GM12878 (cell line): ENCODE measurements at regions of chr9 and their contacts with region 1.

Region 1: DNA sequence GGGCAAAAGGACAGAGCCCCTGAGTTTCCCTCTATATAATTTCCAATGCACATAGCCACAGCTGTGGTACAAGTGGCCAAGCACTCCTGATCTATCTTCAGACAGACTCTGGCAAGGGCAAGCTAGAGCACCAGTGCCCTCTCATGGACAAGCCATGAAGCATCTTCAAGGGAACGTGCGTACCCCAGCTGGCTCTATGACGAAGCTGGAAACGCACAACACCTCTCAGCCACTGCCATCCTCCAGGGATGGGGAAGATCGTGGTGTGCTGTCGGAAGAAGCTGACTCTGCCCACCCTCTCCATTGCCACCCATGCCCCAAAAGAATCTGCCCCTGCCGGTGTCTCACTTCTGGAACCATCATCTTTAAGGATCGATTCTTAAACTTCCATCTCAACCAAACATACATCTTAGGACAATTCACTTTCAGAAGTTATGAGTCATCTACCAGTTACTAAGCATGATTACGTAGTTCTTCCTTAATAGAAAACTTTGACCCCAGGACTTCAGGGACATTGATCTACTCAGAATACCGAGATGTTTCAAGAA is 482.9 kb downstream of the AGTPBP1 start:
- DNase-seq: peak; percentile 20
- ATAC-seq: peak; percentile 97
- H3K4me3 ChIP-seq: no peak overlapping the region
- H3K27ac ChIP-seq: no peak overlapping the region
- H3K4me1 ChIP-seq: no peaks in the 10 kb centered on the region
- H3K27me3 ChIP-seq: peaks cover 0 to 3% of the 10 kb centered on the region in 2 experiments; a peak in 1 of 4 replicates
- CTCF ChIP-seq: peak; percentile 69 to 82 (median 72)
- EP300 ChIP-seq: no peak
- POLR2A ChIP-seq: no peak
- RAD21 ChIP-seq: peak; percentile 75

Region 2: GRCh38 chr9:84397151-84397728 is 861.7 kb before region 1 on chr9:
- CTCF ChIA-PET with region 1: interaction called, 46 read pairs
- POLR2A ChIA-PET with region 1: no interaction called
- RAD21 ChIA-PET with region 1: interaction called, 11 read pairs
- SMC1A ChIA-PET with region 1: interaction called, 9 read pairs
- in situ Hi-C with region 1: loop called (anchors 10 kb)
- intact Hi-C with region 1: loop called (anchors 2 kb)
- DNase-seq: peak; percentile 8
- ATAC-seq: peak; percentile 96
- H3K4me3 ChIP-seq: no peak overlapping the region
- H3K27ac ChIP-seq: no peak overlapping the region
- H3K4me1 ChIP-seq: no peaks in the 10 kb centered on the region
- H3K27me3 ChIP-seq: peaks cover 0 to 2% of the 10 kb centered on the region in 2 experiments; a peak in 1 of 4 replicates
- CTCF ChIP-seq: peak; percentile 77 to 91 (median 80)
- EP300 ChIP-seq: no peak
- POLR2A ChIP-seq: no peak
- RAD21 ChIP-seq: peak; percentile 87

Region 3: GRCh38 chr9:84404095-84404686 is 854.7 kb before region 1 on chr9:
- CTCF ChIA-PET with region 1: interaction called, 4 read pairs
- POLR2A ChIA-PET with region 1: no interaction called
- RAD21 ChIA-PET with region 1: no interaction called
- SMC1A ChIA-PET with region 1: interaction called, 5 read pairs
- in situ Hi-C with region 1: loop called (anchors 10 kb)
- intact Hi-C with region 1: no loop called
- DNase-seq: no peak
- ATAC-seq: peak; percentile 47; the same call in 2 of the 3 replicates
- H3K4me3 ChIP-seq: no peak overlapping the region
- H3K27ac ChIP-seq: no peak overlapping the region
- H3K4me1 ChIP-seq: no peaks in the 10 kb centered on the region
- H3K27me3 ChIP-seq: no peaks in the 10 kb centered on the region
- CTCF ChIP-seq: peak; percentile 67 to 76 (median 71)
- EP300 ChIP-seq: no peak
- POLR2A ChIP-seq: no peak
- RAD21 ChIP-seq: peak; percentile 59

Region 4: DNA sequence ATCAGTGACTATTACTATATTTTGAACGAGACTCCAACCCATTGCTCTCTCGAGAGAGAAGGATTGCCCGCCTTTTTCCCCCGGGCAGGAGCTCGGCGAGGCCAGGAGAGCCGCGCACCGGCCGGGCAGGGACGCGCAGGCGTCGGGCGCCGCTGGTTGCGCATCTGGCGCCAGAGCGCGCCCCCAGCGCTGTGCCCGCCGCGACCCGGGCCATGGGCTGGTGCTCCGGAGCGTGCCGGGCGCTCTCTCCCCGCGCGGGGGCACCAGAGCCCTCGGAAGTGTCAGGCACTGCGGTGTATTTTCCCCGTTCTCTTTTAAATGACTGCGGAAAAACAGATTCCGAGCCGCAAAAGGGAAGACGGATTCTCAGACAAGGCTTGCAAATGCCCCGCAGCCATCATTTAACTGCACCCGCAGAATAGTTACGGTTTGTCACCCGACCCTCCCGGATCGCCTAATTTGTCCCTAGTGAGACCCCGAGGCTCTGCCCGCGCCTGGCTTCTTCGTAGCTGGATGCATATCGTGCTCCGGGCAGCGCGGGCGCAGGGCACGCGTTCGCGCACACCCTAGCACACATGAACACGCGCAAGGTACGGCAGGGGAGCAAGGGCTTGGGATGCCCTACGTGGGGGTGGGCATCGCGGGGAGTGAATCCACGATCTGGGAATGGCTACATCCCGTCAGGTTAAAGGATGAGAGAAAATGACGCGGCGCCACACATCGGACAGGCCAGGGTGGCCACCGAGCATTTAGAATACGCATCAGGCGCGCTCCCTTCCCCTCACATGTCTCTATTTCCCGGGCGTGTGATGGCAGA is 590.5 kb before region 1 on chr9:
- CTCF ChIA-PET with region 1: interaction called, 3 read pairs
- POLR2A ChIA-PET with region 1: interaction called, 3 read pairs
- RAD21 ChIA-PET with region 1: no interaction called
- SMC1A ChIA-PET with region 1: no interaction called
- in situ Hi-C with region 1: loop called (anchors 10 kb)
- intact Hi-C with region 1: loop called (anchors 5 kb)
- DNase-seq: no peak
- ATAC-seq: peak; percentile 95
- H3K4me3 ChIP-seq: peak overlapping the region; percentile 56
- H3K27ac ChIP-seq: no peak overlapping the region
- H3K4me1 ChIP-seq: peaks cover 4% of the 10 kb centered on the region; the same call in 1 of the 2 replicates
- H3K27me3 ChIP-seq: peaks cover 5 to 11% of the 10 kb centered on the region in 2 experiments; a peak in 3 of 4 replicates
- CTCF ChIP-seq: peak; percentile 59 to 65 (median 61); a peak in 5 of 6 replicates
- EP300 ChIP-seq: no peak
- POLR2A ChIP-seq: no peak
- RAD21 ChIP-seq: peak; percentile 45

Region 5: GRCh38 chr9:84953797-84954705 is 304.8 kb before region 1 on chr9:
- CTCF ChIA-PET with region 1: no interaction called
- POLR2A ChIA-PET with region 1: no interaction called
- RAD21 ChIA-PET with region 1: interaction called, 3 read pairs
- SMC1A ChIA-PET with region 1: no interaction called
- in situ Hi-C with region 1: no loop called
- intact Hi-C with region 1: loop called (anchors 10 kb)
- DNase-seq: no peak
- ATAC-seq: peak; percentile 99
- H3K4me3 ChIP-seq: no peak overlapping the region
- H3K27ac ChIP-seq: no peak overlapping the region
- H3K4me1 ChIP-seq: no peaks in the 10 kb centered on the region
- H3K27me3 ChIP-seq: no peaks in the 10 kb centered on the region
- CTCF ChIP-seq: peak; percentile 93 to 95 (median 94)
- EP300 ChIP-seq: no peak
- POLR2A ChIP-seq: no peak
- RAD21 ChIP-seq: peak; percentile 83

Region 6: GRCh38 chr9:84997472-84997871 is 261.4 kb before region 1 on chr9:
- CTCF ChIA-PET with region 1: interaction called, 5 read pairs
- POLR2A ChIA-PET with region 1: no interaction called
- RAD21 ChIA-PET with region 1: interaction called, 12 read pairs
- SMC1A ChIA-PET with region 1: interaction called, 9 read pairs
- in situ Hi-C with region 1: no loop called
- intact Hi-C with region 1: no loop called
- DNase-seq: no peak
- ATAC-seq: peak; percentile 49; the same call in 2 of the 3 replicates
- H3K4me3 ChIP-seq: no peak overlapping the region
- H3K27ac ChIP-seq: no peak overlapping the region
- H3K4me1 ChIP-seq: no peaks in the 10 kb centered on the region
- H3K27me3 ChIP-seq: no peaks in the 10 kb centered on the region; a peak in 1 of 4 replicates
- CTCF ChIP-seq: peak in 2 of 3 experiments; percentile 5 to 27; a peak in 3 of 6 replicates
- EP300 ChIP-seq: no peak
- POLR2A ChIP-seq: no peak
- RAD21 ChIP-seq: peak; percentile 41